ENCODE measurements at regions of chr15 and their contacts with region 1.

Region 1: DNA sequence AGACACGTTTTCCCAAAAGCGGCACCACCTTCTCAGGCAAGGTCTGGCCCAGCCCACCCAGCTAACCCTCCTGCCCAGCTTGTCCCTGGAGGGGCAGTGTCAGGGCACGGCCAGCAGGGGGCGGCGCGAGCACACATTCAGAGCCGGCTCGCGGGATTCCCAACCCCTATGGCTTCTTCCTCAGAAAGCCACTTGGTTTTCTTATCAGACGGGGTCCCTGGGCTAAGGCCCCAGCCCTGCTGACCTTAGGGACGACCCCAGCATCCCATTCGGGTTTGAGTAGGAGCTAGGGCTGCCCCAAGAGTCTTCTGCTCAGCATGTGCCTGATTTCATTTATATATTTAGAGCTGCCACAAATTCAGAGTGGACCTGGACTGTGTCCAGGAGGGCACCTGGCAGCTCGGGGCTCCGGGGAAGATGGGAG is 14.5 kb downstream of the RLBP1 start:
- DNase-seq: peak; percentile 82 to 99
- ATAC-seq: peak; percentile 98 to 99
- H3K4me3 ChIP-seq: peak overlapping the region; percentile 36
- H3K27ac ChIP-seq: peak overlapping the region; percentile 23 to 65; a peak in 4 of 6 replicates
- H3K4me1 ChIP-seq: no peaks in the 10 kb centered on the region
- CTCF ChIP-seq: peak; percentile 97
- EP300 ChIP-seq: no peak
- POLR2A ChIP-seq: no peak
- RAD21 ChIP-seq: peak; percentile 93 to 94

Region 2: GRCh38 chr15:88909956-88910831 is 296.7 kb before region 1 on chr15:
- CTCF ChIA-PET with region 1: no interaction called
- POLR2A ChIA-PET with region 1: no interaction called
- DNase-seq: no peak
- ATAC-seq: no peak
- H3K4me3 ChIP-seq: no peak overlapping the region
- H3K27ac ChIP-seq: peak overlapping the region in 1 of 2 experiments; percentile 89; a peak in 2 of 6 replicates
- H3K4me1 ChIP-seq: peaks cover 35% of the 10 kb centered on the region
- CTCF ChIP-seq: no peak
- EP300 ChIP-seq: no peak
- POLR2A ChIP-seq: no peak
- RAD21 ChIP-seq: no peak

Region 3: DNA sequence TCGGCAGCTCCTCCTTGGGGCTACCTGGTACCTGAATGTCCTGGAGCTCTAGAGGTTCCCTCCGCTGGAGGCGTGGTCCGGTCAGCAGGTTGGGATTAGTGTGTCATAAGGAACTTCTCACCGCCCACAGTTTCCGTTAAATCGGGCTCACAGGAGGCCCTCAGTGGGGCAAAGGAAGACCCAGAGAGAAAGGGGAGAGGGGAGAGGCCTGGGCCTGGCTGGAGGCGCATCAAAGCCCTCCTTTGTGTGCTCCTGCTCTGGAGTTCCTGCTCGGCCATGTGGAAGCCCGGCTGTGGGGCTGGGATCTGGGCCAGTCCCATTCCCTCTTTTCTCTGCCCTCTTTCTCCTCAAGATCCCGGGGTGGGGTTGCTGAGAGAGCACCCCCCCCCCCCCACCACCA is 14.6 kb after region 1 on chr15 and contains the start of gene RLBP1:
- CTCF ChIA-PET with region 1: interaction called, 76 read pairs
- POLR2A ChIA-PET with region 1: no interaction called
- DNase-seq: no peak
- ATAC-seq: no peak
- H3K4me3 ChIP-seq: no peak within 1 kb of the TSS
- H3K27ac ChIP-seq: no peak within 1 kb of the TSS
- H3K4me1 ChIP-seq: no peaks in the 10 kb centered on the region
- CTCF ChIP-seq: no peak
- EP300 ChIP-seq: no peak
- POLR2A ChIP-seq: no peak
- RAD21 ChIP-seq: no peak
- polyA plus RNA-seq, gene RLBP1: not detected in 2 replicates

Region 4: DNA sequence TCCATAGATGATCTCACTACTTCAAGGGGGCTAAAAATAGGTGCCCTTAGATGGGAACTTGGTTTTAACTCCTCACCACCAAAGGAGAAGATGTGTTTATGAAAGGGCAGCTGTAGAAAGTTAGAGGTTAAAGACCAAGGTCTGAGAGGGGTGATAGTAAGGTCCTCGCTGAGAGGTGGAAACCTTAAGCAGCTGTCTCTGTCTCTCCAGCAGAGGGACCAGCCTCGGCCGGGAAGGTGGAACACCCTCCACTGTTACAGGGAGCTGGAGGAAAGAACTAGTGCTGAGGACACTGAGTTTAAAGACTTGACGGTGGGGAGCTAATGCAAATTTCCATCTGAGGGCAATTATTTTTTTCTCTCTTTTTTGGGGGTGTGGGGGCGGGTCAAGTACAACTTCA is 23.4 kb after region 1 on chr15:
- CTCF ChIA-PET with region 1: interaction called, 70 read pairs
- POLR2A ChIA-PET with region 1: no interaction called
- DNase-seq: no peak
- ATAC-seq: peak; percentile 73 to 86
- H3K4me3 ChIP-seq: no peak overlapping the region
- H3K27ac ChIP-seq: no peak overlapping the region
- H3K4me1 ChIP-seq: no peaks in the 10 kb centered on the region
- CTCF ChIP-seq: no peak
- EP300 ChIP-seq: no peak
- POLR2A ChIP-seq: no peak
- RAD21 ChIP-seq: no peak

Region 5: DNA sequence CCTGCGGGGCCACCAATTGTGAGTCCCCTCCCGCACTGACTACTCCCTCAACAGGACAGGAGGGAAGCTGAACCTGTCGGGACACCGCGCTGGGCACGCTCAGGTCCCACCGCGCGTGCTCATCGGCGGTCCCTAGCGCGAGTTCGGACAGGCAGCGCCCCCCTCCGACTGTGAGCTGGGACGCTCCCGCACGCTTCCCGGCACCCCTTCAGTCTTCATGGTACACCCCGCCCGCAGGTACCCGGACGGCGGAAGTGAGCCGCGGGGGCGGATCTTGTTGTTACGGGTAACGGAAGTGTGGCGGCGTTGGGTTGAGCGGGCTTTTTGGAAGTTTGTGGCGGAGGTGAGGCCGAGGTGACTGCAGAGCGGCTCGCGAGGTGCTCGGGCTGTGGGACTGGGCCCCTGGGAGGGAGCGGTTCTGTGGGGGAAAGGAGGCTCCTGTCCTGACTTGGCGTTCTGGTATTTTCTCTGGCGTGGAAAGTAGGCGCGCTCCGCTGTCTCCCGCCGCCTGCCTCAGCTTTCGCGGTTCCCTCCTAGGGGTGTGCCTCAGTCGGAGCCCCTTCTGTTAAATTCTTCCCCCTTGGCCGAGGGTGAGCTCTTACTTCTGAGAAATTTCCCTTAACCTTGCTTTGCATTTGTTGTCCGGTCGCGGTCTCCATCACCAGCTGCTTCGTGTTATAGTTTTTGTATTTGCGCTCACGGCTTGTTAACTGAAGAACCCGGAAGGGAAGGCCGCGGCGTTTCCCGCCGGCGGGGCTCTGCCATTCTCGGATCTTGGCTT is 37.0 kb after region 1 on chr15 and contains the start of gene FANCI:
- CTCF ChIA-PET with region 1: interaction called, 79 read pairs
- POLR2A ChIA-PET with region 1: interaction called, 4 read pairs
- DNase-seq: peak; percentile 96 to 97
- ATAC-seq: peak; percentile 98
- H3K4me3 ChIP-seq: peak within 1 kb of the TSS; percentile 82
- H3K27ac ChIP-seq: peak within 1 kb of the TSS; percentile 79 to 88
- H3K4me1 ChIP-seq: peaks cover 32% of the 10 kb centered on the region; the same call in 2 of the 3 replicates
- CTCF ChIP-seq: peak; percentile 86
- EP300 ChIP-seq: no peak
- POLR2A ChIP-seq: peak; percentile 85
- RAD21 ChIP-seq: peak; percentile 67 to 77
- polyA plus RNA-seq, gene FANCI: 97.3 and 123 TPM in 2 replicates

Region 6: GRCh38 chr15:89278307-89278706 is 71.4 kb after region 1 on chr15:
- CTCF ChIA-PET with region 1: interaction called, 34 read pairs
- POLR2A ChIA-PET with region 1: no interaction called
- DNase-seq: no peak
- ATAC-seq: no peak
- H3K4me3 ChIP-seq: no peak overlapping the region
- H3K27ac ChIP-seq: no peak overlapping the region
- H3K4me1 ChIP-seq: no peaks in the 10 kb centered on the region
- CTCF ChIP-seq: no peak
- EP300 ChIP-seq: no peak
- POLR2A ChIP-seq: no peak
- RAD21 ChIP-seq: no peak

Region 7: DNA sequence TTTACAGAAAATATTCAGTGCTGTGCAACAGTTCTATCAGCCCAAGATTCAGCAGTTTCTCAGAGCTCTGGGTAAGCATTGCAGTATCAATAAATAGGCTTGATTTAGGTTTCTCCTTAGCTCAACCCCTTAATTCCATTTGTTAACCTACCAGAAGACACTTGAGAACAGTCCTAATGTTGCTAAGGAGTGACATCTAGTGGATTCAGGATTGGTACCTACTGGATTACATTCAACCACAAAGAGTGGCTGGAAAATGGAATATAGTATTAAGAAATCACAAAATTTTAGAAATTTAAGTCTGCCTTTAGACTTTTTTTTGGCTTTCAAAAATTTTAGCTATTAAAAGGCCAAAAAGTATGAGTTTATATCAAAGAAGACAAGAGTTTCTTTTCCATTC is 93.0 kb after region 1 on chr15:
- CTCF ChIA-PET with region 1: interaction called, 155 read pairs
- POLR2A ChIA-PET with region 1: interaction called, 3 read pairs
- DNase-seq: peak in 1 of 2 experiments; percentile 38
- ATAC-seq: peak; percentile 80 to 87
- H3K4me3 ChIP-seq: no peak overlapping the region
- H3K27ac ChIP-seq: no peak overlapping the region
- H3K4me1 ChIP-seq: no peaks in the 10 kb centered on the region
- CTCF ChIP-seq: peak; percentile 56
- EP300 ChIP-seq: no peak
- POLR2A ChIP-seq: no peak
- RAD21 ChIP-seq: peak; percentile 48 to 60

Region 8: GRCh38 chr15:89321521-89322410 is 114.8 kb after region 1 on chr15:
- CTCF ChIA-PET with region 1: interaction called, 10 read pairs
- POLR2A ChIA-PET with region 1: no interaction called
- DNase-seq: no peak
- ATAC-seq: peak; percentile 45 to 53; a peak in 4 of 6 replicates
- H3K4me3 ChIP-seq: no peak overlapping the region
- H3K27ac ChIP-seq: no peak overlapping the region
- H3K4me1 ChIP-seq: no peaks in the 10 kb centered on the region
- CTCF ChIP-seq: no peak
- EP300 ChIP-seq: no peak
- POLR2A ChIP-seq: no peak
- RAD21 ChIP-seq: no peak